ENCODE measurements at regions of chr7 and their contacts with region 1.

Region 1: DNA sequence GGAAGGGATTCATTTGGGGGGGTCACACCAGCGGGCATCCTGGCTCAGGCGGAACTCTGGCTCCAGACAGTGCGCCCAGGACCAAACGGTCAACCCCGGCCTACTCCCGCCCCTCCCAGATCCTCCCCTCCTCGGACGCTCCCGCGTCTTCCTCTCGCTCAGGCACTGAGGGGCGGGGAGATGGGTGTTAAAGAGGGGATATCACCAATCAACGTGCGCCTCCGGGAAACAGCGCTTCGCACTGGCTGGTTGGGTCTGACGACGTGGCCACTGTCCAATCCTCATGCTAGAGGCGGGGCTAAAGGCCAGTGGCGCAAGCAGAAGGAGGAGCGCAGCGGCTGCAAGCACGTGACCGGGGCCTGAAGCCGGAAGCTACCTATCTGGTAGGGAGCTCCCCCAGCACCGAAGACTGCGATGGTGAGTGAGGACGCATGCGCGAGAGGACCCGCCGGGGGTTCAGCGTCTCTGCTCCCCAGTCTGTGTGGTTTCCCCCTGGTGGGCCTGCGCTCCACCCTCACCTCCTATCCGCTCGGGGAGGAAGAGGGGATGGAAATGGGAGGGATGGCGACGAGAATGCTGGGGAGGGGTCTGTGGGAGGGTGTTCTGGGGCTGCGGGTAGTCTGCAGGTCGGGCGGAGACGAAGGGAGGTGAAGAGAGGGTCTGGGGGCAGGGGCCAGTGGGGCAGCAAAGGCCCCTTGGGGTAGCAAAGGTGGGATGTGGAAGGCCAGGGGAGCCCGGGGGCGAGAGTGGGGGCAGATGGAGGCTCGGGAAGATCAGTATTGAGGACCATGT is at the start of gene LAMTOR4:
- DNase-seq: peak; percentile 98 to 99
- H3K4me3 ChIP-seq: peak within 1 kb of the TSS; percentile 86 to 91
- H3K27ac ChIP-seq: peak within 1 kb of the TSS; percentile 88 to 89
- H3K4me1 ChIP-seq: peaks cover 6 to 9% of the 10 kb centered on the region in 2 donors
- H3K27me3 ChIP-seq: no peaks in the 10 kb centered on the region
- CTCF ChIP-seq: no peak
- total RNA-seq, gene LAMTOR4: 131 TPM

Region 2: DNA sequence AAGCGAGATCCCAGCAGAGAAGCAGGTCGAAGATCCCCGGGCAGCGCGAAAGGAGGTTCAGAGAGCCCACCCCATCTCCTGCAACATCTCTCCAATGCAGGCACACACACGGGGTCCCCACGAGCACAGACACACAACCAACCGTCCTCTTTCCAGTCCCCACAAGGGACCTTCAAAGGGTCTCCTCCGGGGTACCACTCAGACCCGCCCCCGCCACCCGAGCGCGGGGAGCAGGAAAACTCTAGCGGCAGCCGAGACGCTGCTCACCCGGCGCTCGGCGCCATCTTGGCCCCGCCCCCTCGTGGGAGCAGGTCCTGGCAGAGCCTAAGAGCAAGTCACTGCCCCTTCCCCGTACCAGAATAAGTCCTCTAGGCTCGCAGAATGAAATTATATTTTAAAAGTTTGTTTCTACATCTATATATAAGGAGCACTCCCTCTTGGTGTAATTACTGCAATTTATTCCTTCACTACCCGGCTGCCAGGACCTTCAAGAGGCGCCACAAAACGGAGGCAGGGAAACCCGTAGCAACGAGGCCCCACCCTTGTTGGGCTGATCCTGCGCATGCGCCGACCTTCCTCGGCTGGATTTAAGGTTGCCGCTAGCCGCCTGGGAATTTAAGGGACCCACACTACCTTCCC is 29.6 kb before region 1 on chr7 and contains the starts of genes CNPY4 and TAF6:
- intact Hi-C with region 1: loop called (anchors 2 kb)
- DNase-seq: peak; percentile 81 to 96
- H3K4me3 ChIP-seq: peak within 1 kb of the TSS; percentile 70 to 84
- H3K27ac ChIP-seq: peak within 1 kb of the TSS; percentile 86 to 93
- H3K4me1 ChIP-seq: peaks cover 0 to 9% of the 10 kb centered on the region in 2 donors
- H3K27me3 ChIP-seq: no peaks in the 10 kb centered on the region
- CTCF ChIP-seq: peak in 1 of 3 experiments; percentile 8
- total RNA-seq, gene CNPY4: 1.4 TPM
- total RNA-seq, gene TAF6: 103 TPM

Region 3: GRCh38 chr7:100126931-100127865 is 21.6 kb before region 1 on chr7 and contains the start of gene MBLAC1:
- intact Hi-C with region 1: loop called (anchors 2 kb)
- DNase-seq: peak; percentile 26 to 91
- H3K4me3 ChIP-seq: peak within 1 kb of the TSS; percentile 79 to 99
- H3K27ac ChIP-seq: peak within 1 kb of the TSS; percentile 87 to 98
- H3K4me1 ChIP-seq: peaks cover 0 to 14% of the 10 kb centered on the region in 2 donors
- H3K27me3 ChIP-seq: no peaks in the 10 kb centered on the region
- CTCF ChIP-seq: no peak
- total RNA-seq, gene MBLAC1: not detected

Region 4: DNA sequence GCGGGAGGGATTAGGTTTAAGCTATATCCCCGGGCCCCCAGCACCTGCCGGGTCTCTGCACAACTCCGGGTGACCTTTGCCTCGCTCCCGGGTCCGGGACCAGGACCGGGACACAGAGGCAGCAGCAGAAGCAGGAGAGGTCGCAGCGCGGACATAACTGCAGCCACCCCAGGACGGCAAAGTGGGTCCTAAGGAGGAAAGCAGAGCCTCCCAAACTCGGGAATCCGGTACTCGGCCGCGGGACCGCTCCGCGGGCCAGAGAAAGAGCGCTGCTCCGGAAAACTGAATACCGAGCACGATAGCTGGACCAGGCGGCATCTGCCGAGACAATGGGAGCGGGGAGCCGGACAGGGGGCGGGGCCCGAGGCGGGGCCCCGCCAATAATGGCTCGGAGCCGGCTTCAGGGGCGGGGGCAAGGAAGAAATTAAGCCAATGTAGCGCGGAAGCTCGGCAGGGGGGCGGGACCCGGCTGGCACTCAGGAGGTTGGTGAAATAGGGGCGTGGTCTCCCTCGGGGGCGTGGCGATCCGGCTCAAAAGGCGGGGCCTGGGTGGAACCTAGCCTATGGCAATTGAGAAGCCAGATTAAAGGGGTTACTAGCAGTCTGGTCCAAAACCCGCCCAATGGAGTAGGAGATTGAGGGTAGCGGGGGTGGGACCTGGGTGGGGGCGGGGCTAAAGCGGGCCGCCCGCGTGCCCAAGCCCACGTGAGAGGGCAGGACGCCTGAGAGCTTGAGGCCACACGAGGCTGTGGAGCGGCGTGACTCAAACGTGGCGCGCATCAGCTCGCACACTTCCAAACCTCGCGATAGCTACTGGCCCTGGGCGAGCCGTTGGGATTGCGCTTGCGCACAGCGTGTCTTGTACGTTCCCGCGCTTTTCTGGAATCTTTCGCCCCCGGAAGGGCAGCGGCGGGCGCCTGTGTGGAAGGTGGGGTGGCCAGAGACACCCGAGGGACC is 28.6 kb after region 1 on chr7 and contains the starts of genes GPC2 and STAG3:
- intact Hi-C with region 1: loop called (anchors 1 kb)
- DNase-seq: peak; percentile 83 to 97
- H3K4me3 ChIP-seq: peak within 1 kb of the TSS; percentile 53 to 64
- H3K27ac ChIP-seq: no peak within 1 kb of the TSS
- H3K4me1 ChIP-seq: peaks cover 5 to 12% of the 10 kb centered on the region in 2 donors
- H3K27me3 ChIP-seq: no peaks in the 10 kb centered on the region
- CTCF ChIP-seq: no peak
- total RNA-seq, gene GPC2: not detected
- total RNA-seq, gene STAG3: not detected

Measured in ascending aorta (tissue), 2 donors.